Activated T-helper 1 cell treated with anti-CD3 and anti-CD28 coated beads, Interleukin-12 subunit alpha, Interleukin-12 subunit beta, Interleukin-2, Interleukin-4 antibody, amounts not matched to agents 30 ng/mL and 10 ng/mL and 1 ng/mL, durations not matched to agents 14 hours and 24 hours and 36 hours (primary cell): ENCODE measurements at regions of chr6 and their contacts with region 1.

Region 1: DNA sequence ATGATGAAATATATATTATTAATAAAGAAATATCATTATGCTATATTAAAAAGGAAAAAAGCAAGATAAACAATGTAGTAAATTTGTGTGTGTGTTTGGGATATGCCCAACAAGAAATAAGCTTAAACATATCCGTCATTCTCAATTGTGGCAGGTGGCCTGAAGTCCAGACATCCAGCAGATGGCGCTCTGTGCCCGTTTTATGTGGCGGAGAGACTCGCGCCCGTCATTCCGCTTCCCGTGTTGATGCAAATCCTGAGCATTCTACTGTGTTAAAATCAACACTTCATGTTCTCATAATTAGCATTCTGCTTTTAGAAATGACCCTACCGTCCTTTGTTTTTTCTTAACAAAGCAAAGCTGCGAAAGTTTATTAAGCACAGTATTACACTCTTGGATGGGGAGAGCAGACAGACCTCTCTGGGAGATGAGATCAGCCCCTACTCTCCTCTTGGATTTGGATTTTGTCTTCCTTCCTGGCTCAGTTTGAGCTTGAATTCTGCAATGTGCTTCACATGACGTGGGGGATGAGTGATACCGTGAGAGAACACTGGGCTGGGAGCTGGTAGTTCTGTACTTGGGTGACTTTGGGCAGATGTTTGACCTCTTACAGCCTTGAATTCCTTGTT is 125.8 kb downstream of the MCHR2 start:
- DNase-seq: peak; percentile 51
- H3K4me3 Mint-ChIP-seq: no peak overlapping the region
- H3K27ac Mint-ChIP-seq: no peak overlapping the region
- H3K4me1 Mint-ChIP-seq: peaks cover 5% of the 10 kb centered on the region
- H3K27me3 Mint-ChIP-seq: peaks cover 24% of the 10 kb centered on the region

Region 2: DNA sequence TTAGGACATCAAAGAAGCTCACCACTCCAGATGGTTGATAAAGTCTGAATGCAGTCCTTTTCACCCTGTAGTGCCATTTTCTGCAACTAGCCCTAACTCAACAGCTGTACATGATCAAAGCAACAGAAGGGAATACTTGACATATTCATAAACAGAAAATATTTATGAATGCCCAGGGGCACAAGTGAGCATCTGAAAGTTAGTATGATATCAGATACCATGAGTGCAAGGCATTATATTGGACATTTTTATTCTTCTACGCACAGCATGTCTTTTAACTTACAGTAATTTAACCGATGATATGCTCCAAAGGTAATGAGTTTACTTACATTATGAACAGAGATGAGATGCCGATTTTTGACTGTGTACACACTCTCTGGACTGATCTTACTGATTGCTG is 16.2 kb before region 1 on chr6:
- intact Hi-C with region 1: no loop called
- DNase-seq: no peak
- H3K4me3 Mint-ChIP-seq: no peak overlapping the region
- H3K27ac Mint-ChIP-seq: no peak overlapping the region
- H3K4me1 Mint-ChIP-seq: no peaks in the 10 kb centered on the region
- H3K27me3 Mint-ChIP-seq: peaks cover 1% of the 10 kb centered on the region

Region 3: GRCh38 chr6:99905209-99906106 is 37.3 kb after region 1 on chr6:
- intact Hi-C with region 1: loop called (anchors 1 kb)
- DNase-seq: no peak
- H3K4me3 Mint-ChIP-seq: no peak overlapping the region
- H3K27ac Mint-ChIP-seq: no peak overlapping the region
- H3K4me1 Mint-ChIP-seq: no peaks in the 10 kb centered on the region
- H3K27me3 Mint-ChIP-seq: peaks cover 3% of the 10 kb centered on the region

Region 4: DNA sequence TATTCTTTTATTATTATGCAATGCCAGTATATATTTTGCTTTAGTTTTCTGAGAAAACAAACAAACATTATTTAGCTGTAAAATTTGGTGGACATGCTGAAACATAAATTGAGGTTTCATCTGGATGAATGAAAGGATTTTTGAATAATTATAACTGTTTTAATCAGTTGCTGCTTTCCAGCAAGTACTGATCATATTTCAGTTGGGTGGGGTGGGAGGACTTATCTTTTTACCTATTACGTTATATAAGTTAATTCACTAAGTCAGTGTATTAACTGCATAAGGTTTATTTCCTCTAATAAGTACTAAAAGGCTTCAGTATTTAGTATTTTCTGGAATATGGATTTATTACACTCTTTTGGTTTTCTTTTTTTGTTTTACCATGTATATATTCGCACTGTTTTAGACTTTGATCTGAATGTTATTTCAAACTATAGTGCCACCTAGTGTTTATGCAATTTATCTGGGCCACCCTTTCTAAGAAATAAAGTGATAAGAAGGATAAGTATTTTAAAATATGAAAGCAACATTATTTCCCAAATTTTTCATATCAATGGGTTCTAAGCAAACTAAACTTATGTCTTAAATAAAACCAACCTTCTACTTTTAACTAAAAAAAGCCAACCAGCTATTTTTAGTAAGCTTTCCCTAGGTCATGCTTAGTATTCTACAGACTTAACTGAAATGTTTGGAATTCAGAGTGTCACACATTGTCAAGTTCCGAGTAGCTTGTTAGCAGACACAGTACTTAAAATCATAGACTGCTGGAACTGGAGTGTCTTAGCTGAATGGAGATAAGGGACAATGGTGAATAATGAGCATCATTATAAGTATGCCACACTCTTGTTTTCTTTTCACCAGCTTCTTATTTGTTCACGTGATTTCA is 231.2 kb after region 1 on chr6:
- intact Hi-C with region 1: loop called (anchors 1 kb)
- DNase-seq: no peak
- H3K4me3 Mint-ChIP-seq: no peak overlapping the region
- H3K27ac Mint-ChIP-seq: no peak overlapping the region
- H3K4me1 Mint-ChIP-seq: no peaks in the 10 kb centered on the region
- H3K27me3 Mint-ChIP-seq: peaks cover 21% of the 10 kb centered on the region